Calu3 (cell line): ENCODE measurements at regions of chr12 and their contacts with region 1.

Region 1: DNA sequence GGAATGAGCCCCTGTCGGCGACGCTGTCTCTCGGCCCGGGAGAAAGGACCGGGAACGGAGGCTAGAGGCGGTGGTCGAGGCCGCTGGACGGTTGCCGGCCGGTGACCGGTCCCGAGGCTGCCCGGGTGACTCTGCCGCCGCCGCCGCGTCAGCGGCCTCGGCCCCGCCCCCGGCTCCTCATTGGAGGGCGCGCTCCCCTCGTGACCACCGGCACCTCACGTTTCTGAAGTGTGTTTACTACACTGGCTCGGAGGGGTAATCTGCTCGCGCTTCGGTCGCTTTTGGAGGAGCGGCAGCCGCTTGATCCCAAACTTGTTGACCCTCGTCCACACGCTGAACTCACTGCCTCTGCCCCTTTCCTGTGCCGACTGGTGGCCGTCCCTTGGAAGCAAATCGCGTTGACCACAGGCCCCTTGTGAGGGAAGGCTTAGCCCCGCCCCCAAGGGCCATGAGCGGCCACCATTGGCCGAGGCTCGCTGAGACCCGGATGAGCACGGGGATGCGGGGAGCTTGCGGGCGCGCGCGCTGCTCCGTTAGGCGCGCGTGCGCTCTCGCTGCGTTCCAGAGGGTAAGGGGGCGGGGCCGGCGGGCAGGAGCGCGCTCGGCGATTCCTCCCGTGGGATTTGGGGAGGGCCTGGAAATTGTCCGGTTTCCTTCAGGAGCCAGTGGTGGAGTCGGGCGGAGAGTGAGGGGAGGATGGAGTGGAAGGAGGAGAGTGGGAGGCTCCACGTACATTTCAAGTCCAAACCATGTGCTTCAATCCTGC is at the start of gene CRY1:
- DNase-seq: peak; percentile 98
- H3K4me3 Mint-ChIP-seq: no peak within 1 kb of the TSS
- H3K27ac Mint-ChIP-seq: no peak within 1 kb of the TSS
- H3K4me1 Mint-ChIP-seq: no peaks in the 10 kb centered on the region
- H3K27me3 Mint-ChIP-seq: peaks cover 18% of the 10 kb centered on the region
- CTCF ChIP-seq: no peak
- total RNA-seq, gene CRY1: 17.1 and 19.7 TPM in 2 replicates

Region 2: DNA sequence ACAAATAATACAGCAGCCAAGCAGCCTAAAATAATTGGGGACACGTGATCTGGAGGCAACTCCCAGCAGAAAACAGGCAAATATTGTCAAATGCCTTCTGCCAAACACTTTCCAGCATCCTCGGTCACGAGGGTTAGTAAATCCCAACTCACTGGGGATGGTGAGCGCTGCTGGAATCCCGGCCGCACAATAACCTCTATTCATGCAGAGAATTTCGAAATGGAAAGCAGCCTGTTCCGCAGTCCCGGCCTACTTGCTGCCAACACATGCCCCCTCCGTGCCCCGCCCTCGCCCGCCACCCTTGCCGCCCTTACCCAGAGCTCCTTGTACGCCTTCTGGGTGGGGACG is 448.6 kb before region 1 on chr12:
- CTCF ChIA-PET with region 1: no interaction called
- intact Hi-C with region 1: loop called (anchors 10 kb)
- DNase-seq: peak; percentile 93
- H3K4me3 Mint-ChIP-seq: peak overlapping the region; percentile 39
- H3K27ac Mint-ChIP-seq: peak overlapping the region; percentile 91
- H3K4me1 Mint-ChIP-seq: peaks cover 73% of the 10 kb centered on the region
- H3K27me3 Mint-ChIP-seq: no peaks in the 10 kb centered on the region
- CTCF ChIP-seq: no peak

Region 3: DNA sequence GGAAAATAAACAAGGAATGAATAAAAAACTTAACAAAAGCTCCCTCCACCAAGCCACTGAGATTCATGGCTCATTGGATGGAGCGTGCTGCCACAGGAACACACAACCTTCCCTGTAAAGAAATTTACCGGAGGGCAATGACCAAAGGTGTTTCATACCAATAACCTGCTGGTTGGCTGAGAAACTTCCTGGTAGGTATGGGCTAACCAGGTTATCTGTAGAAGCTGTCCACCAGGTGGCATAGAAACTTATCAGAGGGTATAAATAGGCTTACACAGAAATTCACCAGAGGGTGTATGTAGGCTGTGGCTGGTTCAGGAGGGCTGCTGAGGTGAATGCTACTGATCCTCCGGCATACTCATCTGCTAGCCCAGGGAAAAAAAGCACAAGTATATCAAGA is 79.6 kb before region 1 on chr12:
- CTCF ChIA-PET with region 1: no interaction called
- intact Hi-C with region 1: loop called (anchors 1 kb)
- DNase-seq: peak; percentile 71
- H3K4me3 Mint-ChIP-seq: no peak overlapping the region
- H3K27ac Mint-ChIP-seq: no peak overlapping the region
- H3K4me1 Mint-ChIP-seq: no peaks in the 10 kb centered on the region
- H3K27me3 Mint-ChIP-seq: no peaks in the 10 kb centered on the region
- CTCF ChIP-seq: peak; percentile 53

Region 4: GRCh38 chr12:107027636-107028053 is 66.0 kb before region 1 on chr12:
- CTCF ChIA-PET with region 1: interaction called, 3 read pairs
- intact Hi-C with region 1: loop called (anchors 5 kb)
- DNase-seq: peak; percentile 35
- H3K4me3 Mint-ChIP-seq: no peak overlapping the region
- H3K27ac Mint-ChIP-seq: peak overlapping the region; percentile 70
- H3K4me1 Mint-ChIP-seq: peaks cover 16% of the 10 kb centered on the region
- H3K27me3 Mint-ChIP-seq: no peaks in the 10 kb centered on the region
- CTCF ChIP-seq: no peak

Region 5: DNA sequence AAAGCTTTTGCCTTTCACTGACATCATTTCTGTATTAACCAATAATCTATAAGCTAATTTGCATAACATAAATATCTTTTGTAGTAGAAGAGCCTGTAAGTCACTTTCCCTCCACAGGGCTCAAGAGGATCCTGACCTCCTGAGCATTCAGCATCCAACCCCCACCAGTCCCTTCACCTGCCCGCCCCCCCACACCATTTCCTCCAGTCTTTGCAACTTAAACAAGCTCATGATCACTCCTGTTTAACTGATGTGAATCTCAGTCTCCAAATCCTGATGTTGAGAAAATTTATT is 11.8 kb after region 1 on chr12:
- CTCF ChIA-PET with region 1: interaction called, 19 read pairs
- intact Hi-C with region 1: loop called (anchors 1 kb)
- DNase-seq: no peak
- H3K4me3 Mint-ChIP-seq: no peak overlapping the region
- H3K27ac Mint-ChIP-seq: no peak overlapping the region
- H3K4me1 Mint-ChIP-seq: no peaks in the 10 kb centered on the region
- H3K27me3 Mint-ChIP-seq: peaks cover 55% of the 10 kb centered on the region
- CTCF ChIP-seq: no peak

Region 6: DNA sequence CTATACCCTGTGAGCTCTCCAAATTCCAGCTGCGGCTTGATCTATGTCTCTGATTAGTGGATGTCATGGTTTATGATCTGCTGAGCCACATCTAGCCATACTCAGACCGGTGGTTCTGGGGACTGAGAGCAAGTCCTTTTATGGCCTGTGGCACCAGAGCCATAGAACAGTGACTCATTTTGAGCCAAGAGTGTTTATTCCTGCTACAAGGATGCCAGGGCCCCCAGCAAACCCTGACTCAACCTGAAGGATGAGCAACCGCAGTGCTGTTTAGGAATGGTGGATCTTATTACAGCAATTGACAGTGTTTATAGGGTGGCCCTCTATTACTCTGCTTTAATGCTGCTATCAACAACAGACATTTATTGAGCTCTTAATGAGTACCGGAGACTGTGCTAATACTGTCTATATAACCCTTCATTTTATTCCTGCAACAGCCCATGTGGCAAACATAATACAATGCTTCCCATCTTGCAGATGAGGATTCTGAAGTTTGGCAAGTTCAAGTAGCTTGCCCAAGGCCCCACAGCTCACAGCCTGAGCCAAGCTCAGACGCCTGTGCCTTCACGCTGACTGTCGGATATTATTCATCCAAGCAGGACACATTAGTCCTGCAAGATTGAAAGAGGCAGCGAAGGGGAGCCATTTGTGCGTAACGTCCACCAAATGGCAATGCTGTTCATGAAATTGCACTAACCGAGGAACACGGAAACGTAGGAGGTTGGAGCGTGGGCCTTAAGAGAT is 318.4 kb after region 1 on chr12:
- CTCF ChIA-PET with region 1: no interaction called
- intact Hi-C with region 1: no loop called
- DNase-seq: no peak
- H3K4me3 Mint-ChIP-seq: no peak overlapping the region
- H3K27ac Mint-ChIP-seq: no peak overlapping the region
- H3K4me1 Mint-ChIP-seq: no peaks in the 10 kb centered on the region
- H3K27me3 Mint-ChIP-seq: peaks cover 78% of the 10 kb centered on the region
- CTCF ChIP-seq: no peak

Region 7: GRCh38 chr12:108305520-108305919 is 1211.9 kb after region 1 on chr12:
- CTCF ChIA-PET with region 1: no interaction called
- intact Hi-C with region 1: loop called (anchors 10 kb)
- DNase-seq: peak; percentile 51
- H3K4me3 Mint-ChIP-seq: no peak overlapping the region
- H3K27ac Mint-ChIP-seq: peak overlapping the region; percentile 19
- H3K4me1 Mint-ChIP-seq: peaks cover 67% of the 10 kb centered on the region
- H3K27me3 Mint-ChIP-seq: no peaks in the 10 kb centered on the region
- CTCF ChIP-seq: no peak